Naive thymus-derived CD4-positive, alpha-beta T cell (primary cell): ENCODE measurements at regions of chr12 and their contacts with region 1.

Region 1: GRCh38 chr12:68686595-68687521 is at the start of gene NUP107:
- DNase-seq: peak; percentile 92 to 97 (median 95)
- ATAC-seq: peak; percentile 99
- H3K4me3 ChIP-seq: peak within 1 kb of the TSS; percentile 90
- H3K4me3 Mint-ChIP-seq: peak within 1 kb of the TSS; percentile 94 to 100 (median 98)
- H3K27ac ChIP-seq: peak within 1 kb of the TSS; percentile 85
- H3K27ac Mint-ChIP-seq: peak within 1 kb of the TSS; percentile 96 to 100 (median 99)
- H3K4me1 ChIP-seq: peaks cover 13 to 16% of the 10 kb centered on the region in 2 donors
- H3K4me1 Mint-ChIP-seq: peaks cover 10 to 51% (median 42%) of the 10 kb centered on the region in 7 donors
- H3K27me3 ChIP-seq: no peaks in the 10 kb centered on the region
- H3K27me3 Mint-ChIP-seq: peaks cover 0 to 2% (median 0%) of the 10 kb centered on the region in 5 donors
- total RNA-seq, gene NUP107: 45.2 to 80.9 (median 69.0) TPM

Region 2: GRCh38 chr12:68086019-68086603 is 600.7 kb before region 1 on chr12:
- CTCF ChIA-PET with region 1: no interaction called
- POLR2A ChIA-PET with region 1: no interaction called
- intact Hi-C with region 1: no loop called
- DNase-seq: no peak
- ATAC-seq: no peak
- H3K4me3 ChIP-seq: no peak overlapping the region
- H3K4me3 Mint-ChIP-seq: no peak overlapping the region
- H3K27ac ChIP-seq: no peak overlapping the region
- H3K27ac Mint-ChIP-seq: no peak overlapping the region
- H3K4me1 ChIP-seq: no peaks in the 10 kb centered on the region
- H3K4me1 Mint-ChIP-seq: peaks cover 0 to 3% (median 0%) of the 10 kb centered on the region in 7 donors
- H3K27me3 ChIP-seq: no peaks in the 10 kb centered on the region
- H3K27me3 Mint-ChIP-seq: peaks cover 0 to 6% (median 0%) of the 10 kb centered on the region in 5 donors

Region 3: GRCh38 chr12:68331869-68332727 is 354.8 kb before region 1 on chr12 and contains the start of gene MDM1:
- CTCF ChIA-PET with region 1: interaction called, 3 read pairs
- POLR2A ChIA-PET with region 1: interaction called, 3 read pairs
- intact Hi-C with region 1: loop called (anchors 1 kb)
- DNase-seq: peak; percentile 85 to 96 (median 95)
- ATAC-seq: peak; percentile 98
- H3K4me3 ChIP-seq: peak within 1 kb of the TSS; percentile 68
- H3K4me3 Mint-ChIP-seq: peak within 1 kb of the TSS; percentile 85 to 93 (median 91)
- H3K27ac ChIP-seq: peak within 1 kb of the TSS; percentile 73
- H3K27ac Mint-ChIP-seq: peak within 1 kb of the TSS; percentile 78 to 93 (median 90)
- H3K4me1 ChIP-seq: peaks cover 9 to 26% of the 10 kb centered on the region in 2 donors
- H3K4me1 Mint-ChIP-seq: peaks cover 33 to 61% (median 52%) of the 10 kb centered on the region in 7 donors
- H3K27me3 ChIP-seq: no peaks in the 10 kb centered on the region
- H3K27me3 Mint-ChIP-seq: peaks cover 0 to 15% (median 0%) of the 10 kb centered on the region in 5 donors
- total RNA-seq, gene MDM1: 16.2 to 38.4 (median 23.4) TPM

Region 4: GRCh38 chr12:68451261-68452077 is 235.4 kb before region 1 on chr12:
- CTCF ChIA-PET with region 1: no interaction called
- POLR2A ChIA-PET with region 1: no interaction called
- intact Hi-C with region 1: loop called in 1 of 2 experiments (anchors 5 kb)
- DNase-seq: peak in 7 of 9 donors; percentile 8 to 59 (median 29)
- ATAC-seq: peak; percentile 68
- H3K4me3 ChIP-seq: peak overlapping the region; percentile 28
- H3K4me3 Mint-ChIP-seq: peak overlapping the region; percentile 61 to 85 (median 72)
- H3K27ac ChIP-seq: peak overlapping the region; percentile 48
- H3K27ac Mint-ChIP-seq: peak overlapping the region; percentile 49 to 97 (median 76)
- H3K4me1 ChIP-seq: peaks cover 64 to 68% of the 10 kb centered on the region in 2 donors
- H3K4me1 Mint-ChIP-seq: peaks cover 72 to 100% (median 95%) of the 10 kb centered on the region in 7 donors
- H3K27me3 ChIP-seq: no peaks in the 10 kb centered on the region
- H3K27me3 Mint-ChIP-seq: no peaks in the 10 kb centered on the region

Region 5: GRCh38 chr12:68587448-68587873 is 99.4 kb before region 1 on chr12:
- CTCF ChIA-PET with region 1: no interaction called
- POLR2A ChIA-PET with region 1: interaction called, 4 read pairs
- intact Hi-C with region 1: loop called in 1 of 2 experiments (anchors 1 kb)
- DNase-seq: peak in 8 of 9 donors; percentile 39 to 66 (median 53)
- ATAC-seq: peak; percentile 72
- H3K4me3 ChIP-seq: no peak overlapping the region
- H3K4me3 Mint-ChIP-seq: peak overlapping the region; percentile 10 to 70 (median 64)
- H3K27ac ChIP-seq: no peak overlapping the region
- H3K27ac Mint-ChIP-seq: peak overlapping the region; percentile 78 to 96 (median 88)
- H3K4me1 ChIP-seq: peaks cover 26 to 37% of the 10 kb centered on the region in 2 donors
- H3K4me1 Mint-ChIP-seq: peaks cover 33 to 82% (median 60%) of the 10 kb centered on the region in 7 donors
- H3K27me3 ChIP-seq: no peaks in the 10 kb centered on the region
- H3K27me3 Mint-ChIP-seq: no peaks in the 10 kb centered on the region

Region 6: GRCh38 chr12:68665016-68665569 is 21.8 kb before region 1 on chr12:
- CTCF ChIA-PET with region 1: interaction called, 6 read pairs
- POLR2A ChIA-PET with region 1: interaction called, 4 read pairs
- intact Hi-C with region 1: loop called in 1 of 2 experiments (anchors 2 kb)
- DNase-seq: no peak
- ATAC-seq: peak; percentile 22
- H3K4me3 ChIP-seq: no peak overlapping the region
- H3K4me3 Mint-ChIP-seq: no peak overlapping the region
- H3K27ac ChIP-seq: no peak overlapping the region
- H3K27ac Mint-ChIP-seq: peak overlapping the region in 8 of 9 donors; percentile 25 to 91 (median 76)
- H3K4me1 ChIP-seq: peaks cover 4 to 6% of the 10 kb centered on the region in 2 donors
- H3K4me1 Mint-ChIP-seq: peaks cover 5 to 47% (median 34%) of the 10 kb centered on the region in 7 donors
- H3K27me3 ChIP-seq: no peaks in the 10 kb centered on the region
- H3K27me3 Mint-ChIP-seq: no peaks in the 10 kb centered on the region

Region 7: GRCh38 chr12:68745904-68746571 is 59.2 kb after region 1 on chr12 and contains the start of gene SLC35E3:
- CTCF ChIA-PET with region 1: no interaction called
- POLR2A ChIA-PET with region 1: interaction called, 3 read pairs
- intact Hi-C with region 1: loop called (anchors 1 kb)
- DNase-seq: peak; percentile 81 to 91 (median 86)
- ATAC-seq: peak; percentile 99
- H3K4me3 ChIP-seq: peak within 1 kb of the TSS; percentile 98
- H3K4me3 Mint-ChIP-seq: peak within 1 kb of the TSS; percentile 91 to 99 (median 96)
- H3K27ac ChIP-seq: peak within 1 kb of the TSS; percentile 79
- H3K27ac Mint-ChIP-seq: peak within 1 kb of the TSS; percentile 92 to 97 (median 96)
- H3K4me1 ChIP-seq: peaks cover 7 to 16% of the 10 kb centered on the region in 2 donors
- H3K4me1 Mint-ChIP-seq: peaks cover 27 to 64% (median 54%) of the 10 kb centered on the region in 7 donors
- H3K27me3 ChIP-seq: no peaks in the 10 kb centered on the region
- H3K27me3 Mint-ChIP-seq: no peaks in the 10 kb centered on the region
- total RNA-seq, gene SLC35E3: 9.0 to 12.1 (median 9.2) TPM

Region 8: DNA sequence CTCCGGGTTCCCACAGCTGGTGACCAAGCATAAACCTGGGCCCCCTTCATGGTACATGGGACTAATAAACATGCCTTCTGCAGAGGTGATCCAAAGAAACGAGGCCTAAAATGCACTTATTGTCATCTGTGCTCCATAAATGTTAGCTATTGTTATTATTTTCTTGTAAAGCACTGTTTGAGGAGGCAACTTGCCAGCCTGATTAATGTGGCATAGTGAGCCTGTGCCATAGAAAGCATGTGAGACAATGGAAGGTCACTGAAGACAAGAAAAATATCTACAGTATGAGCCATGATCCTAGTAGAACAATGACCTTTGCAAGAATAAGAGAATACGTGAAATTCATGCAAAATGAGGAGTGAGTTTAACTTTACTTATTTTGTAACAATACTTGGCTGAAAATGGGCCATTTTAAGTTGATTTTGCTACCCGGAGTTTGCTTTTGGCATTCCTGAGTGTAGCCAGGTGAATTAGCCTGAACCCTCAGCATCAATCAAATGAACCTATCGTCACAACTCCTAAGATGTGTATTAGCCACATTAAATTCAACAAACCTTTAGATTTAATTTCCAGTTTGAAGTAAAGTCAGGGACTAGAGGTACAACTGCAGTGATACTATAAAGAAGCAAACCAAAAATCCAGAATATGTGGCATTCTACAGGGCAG is 193.9 kb after region 1 on chr12:
- CTCF ChIA-PET with region 1: no interaction called
- POLR2A ChIA-PET with region 1: no interaction called
- intact Hi-C with region 1: no loop called
- DNase-seq: no peak
- ATAC-seq: no peak
- H3K4me3 ChIP-seq: no peak overlapping the region
- H3K4me3 Mint-ChIP-seq: no peak overlapping the region
- H3K27ac ChIP-seq: no peak overlapping the region
- H3K27ac Mint-ChIP-seq: no peak overlapping the region
- H3K4me1 ChIP-seq: no peaks in the 10 kb centered on the region
- H3K4me1 Mint-ChIP-seq: peaks cover 0 to 10% (median 0%) of the 10 kb centered on the region in 7 donors
- H3K27me3 ChIP-seq: no peaks in the 10 kb centered on the region
- H3K27me3 Mint-ChIP-seq: peaks cover 0 to 4% (median 0%) of the 10 kb centered on the region in 5 donors